Caco-2 (cell line): ENCODE measurements at regions of chr4 and their contacts with region 1.

Region 1: GRCh38 chr4:111475001-111475400 is 670.3 kb upstream of the FAM241A start:
- DNase-seq: peak; percentile 50 to 62
- H3K4me3 ChIP-seq: no peak overlapping the region
- H3K4me3 Mint-ChIP-seq: no peak overlapping the region
- H3K27ac Mint-ChIP-seq: no peak overlapping the region
- H3K4me1 ChIP-seq: no peaks in the 10 kb centered on the region
- H3K4me1 Mint-ChIP-seq: no peaks in the 10 kb centered on the region
- H3K27me3 ChIP-seq: no peaks in the 10 kb centered on the region
- H3K27me3 Mint-ChIP-seq: no peaks in the 10 kb centered on the region
- CTCF ChIP-seq: peak; percentile 64 to 68

Region 2: DNA sequence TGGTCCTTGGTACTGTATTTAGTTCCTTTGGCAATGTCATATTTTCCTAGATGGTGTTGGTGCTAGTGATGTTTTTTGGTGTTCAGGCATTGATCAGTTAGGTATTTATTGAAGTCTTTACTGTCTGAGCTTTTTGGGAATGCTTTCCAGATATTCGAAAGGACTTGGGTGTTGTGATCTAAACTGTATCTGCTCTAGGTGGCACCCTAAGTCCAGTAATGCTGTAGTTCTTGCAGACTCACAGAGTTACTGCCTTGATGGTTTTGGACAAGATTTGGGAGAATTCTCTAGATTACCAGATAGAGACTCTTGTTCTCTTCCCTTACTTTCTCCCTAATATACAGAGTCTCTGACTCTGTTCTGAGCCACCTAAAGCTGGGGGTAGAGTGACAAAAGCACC is 338.6 kb before region 1 on chr4:
- CTCF ChIA-PET with region 1: interaction called, 6 read pairs
- POLR2A ChIA-PET with region 1: no interaction called
- intact Hi-C with region 1: loop called (anchors 1 kb)
- DNase-seq: peak in 1 of 2 experiments; percentile 29
- H3K4me3 ChIP-seq: no peak overlapping the region
- H3K4me3 Mint-ChIP-seq: no peak overlapping the region
- H3K27ac Mint-ChIP-seq: no peak overlapping the region
- H3K4me1 ChIP-seq: no peaks in the 10 kb centered on the region
- H3K4me1 Mint-ChIP-seq: no peaks in the 10 kb centered on the region
- H3K27me3 ChIP-seq: no peaks in the 10 kb centered on the region
- H3K27me3 Mint-ChIP-seq: peaks cover 1% of the 10 kb centered on the region
- CTCF ChIP-seq: peak in 1 of 2 experiments; percentile 33

Region 3: GRCh38 chr4:111268769-111269414 is 206.1 kb before region 1 on chr4:
- CTCF ChIA-PET with region 1: no interaction called
- POLR2A ChIA-PET with region 1: no interaction called
- intact Hi-C with region 1: no loop called
- DNase-seq: no peak
- H3K4me3 ChIP-seq: no peak overlapping the region
- H3K4me3 Mint-ChIP-seq: peak overlapping the region; percentile 63
- H3K27ac Mint-ChIP-seq: peak overlapping the region; percentile 90
- H3K4me1 ChIP-seq: peaks cover 20% of the 10 kb centered on the region
- H3K4me1 Mint-ChIP-seq: peaks cover 31% of the 10 kb centered on the region
- H3K27me3 ChIP-seq: no peaks in the 10 kb centered on the region
- H3K27me3 Mint-ChIP-seq: no peaks in the 10 kb centered on the region
- CTCF ChIP-seq: no peak

Region 4: GRCh38 chr4:111362941-111363361 is 112.0 kb before region 1 on chr4:
- CTCF ChIA-PET with region 1: no interaction called
- POLR2A ChIA-PET with region 1: no interaction called
- intact Hi-C with region 1: no loop called
- DNase-seq: no peak
- H3K4me3 ChIP-seq: no peak overlapping the region
- H3K4me3 Mint-ChIP-seq: no peak overlapping the region
- H3K27ac Mint-ChIP-seq: no peak overlapping the region
- H3K4me1 ChIP-seq: no peaks in the 10 kb centered on the region
- H3K4me1 Mint-ChIP-seq: no peaks in the 10 kb centered on the region
- H3K27me3 ChIP-seq: no peaks in the 10 kb centered on the region
- H3K27me3 Mint-ChIP-seq: peaks cover 3% of the 10 kb centered on the region
- CTCF ChIP-seq: no peak

Region 5: GRCh38 chr4:111434586-111434985 is 40.4 kb before region 1 on chr4:
- CTCF ChIA-PET with region 1: no interaction called
- POLR2A ChIA-PET with region 1: no interaction called
- intact Hi-C with region 1: no loop called
- DNase-seq: no peak
- H3K4me3 ChIP-seq: no peak overlapping the region
- H3K4me3 Mint-ChIP-seq: no peak overlapping the region
- H3K27ac Mint-ChIP-seq: no peak overlapping the region
- H3K4me1 ChIP-seq: no peaks in the 10 kb centered on the region
- H3K4me1 Mint-ChIP-seq: no peaks in the 10 kb centered on the region
- H3K27me3 ChIP-seq: no peaks in the 10 kb centered on the region
- H3K27me3 Mint-ChIP-seq: peaks cover 2% of the 10 kb centered on the region
- CTCF ChIP-seq: no peak

Region 6: GRCh38 chr4:111631215-111631999 is 156.4 kb after region 1 on chr4:
- CTCF ChIA-PET with region 1: no interaction called
- POLR2A ChIA-PET with region 1: no interaction called
- intact Hi-C with region 1: loop called (anchors 10 kb)
- DNase-seq: peak in 1 of 2 experiments; percentile 7
- H3K4me3 ChIP-seq: no peak overlapping the region
- H3K4me3 Mint-ChIP-seq: no peak overlapping the region
- H3K27ac Mint-ChIP-seq: no peak overlapping the region
- H3K4me1 ChIP-seq: no peaks in the 10 kb centered on the region
- H3K4me1 Mint-ChIP-seq: peaks cover under 1% of the 10 kb centered on the region
- H3K27me3 ChIP-seq: no peaks in the 10 kb centered on the region
- H3K27me3 Mint-ChIP-seq: peaks cover 9% of the 10 kb centered on the region
- CTCF ChIP-seq: peak; percentile 12 to 63